Breast epithelium (tissue), 4 donors: ENCODE measurements at regions of chr16 and their contacts with region 1.

Region 1: GRCh38 chr16:25896412-25896811 is 204.7 kb downstream of the HS3ST4 start:
- DNase-seq: no peak
- H3K4me3 ChIP-seq: no peak overlapping the region
- H3K27ac ChIP-seq: no peak overlapping the region
- H3K4me1 ChIP-seq: no peaks in the 10 kb centered on the region
- H3K27me3 ChIP-seq: no peaks in the 10 kb centered on the region
- CTCF ChIP-seq: no peak
- POLR2A ChIP-seq: no peak

Region 2: GRCh38 chr16:24748242-24748641 is 1148.2 kb before region 1 on chr16:
- intact Hi-C with region 1: no loop called
- DNase-seq: peak in 1 of 2 donors; percentile 39
- H3K4me3 ChIP-seq: no peak overlapping the region
- H3K27ac ChIP-seq: peak overlapping the region; percentile 22 to 73
- H3K4me1 ChIP-seq: peaks cover 0 to 12% of the 10 kb centered on the region in 2 donors
- H3K27me3 ChIP-seq: no peaks in the 10 kb centered on the region
- CTCF ChIP-seq: no peak
- POLR2A ChIP-seq: no peak

Region 3: DNA sequence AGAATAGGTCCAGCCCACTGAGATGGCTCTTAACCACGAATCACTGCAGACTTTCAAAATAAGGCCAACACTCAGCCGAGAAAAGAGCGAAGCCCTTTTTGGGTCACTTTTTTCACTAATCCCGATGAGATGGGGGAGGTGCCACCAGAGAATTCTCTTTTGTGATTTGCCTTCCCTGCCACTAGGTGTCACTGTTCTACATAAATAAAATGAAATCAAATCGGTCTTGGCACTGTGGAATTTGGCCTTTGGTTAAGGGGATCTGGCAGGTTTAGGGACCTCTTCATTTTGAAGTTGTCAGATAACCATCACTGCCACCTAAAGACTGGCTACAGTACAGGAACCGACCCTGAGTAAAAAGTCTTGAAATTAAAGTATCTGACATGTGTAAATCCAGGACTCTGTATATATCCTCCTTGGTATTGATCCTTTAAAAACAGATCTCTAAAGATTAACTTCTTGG is 57.7 kb before region 1 on chr16:
- intact Hi-C with region 1: no loop called
- DNase-seq: no peak
- H3K4me3 ChIP-seq: peak overlapping the region in 1 of 3 donors; percentile 3
- H3K27ac ChIP-seq: no peak overlapping the region
- H3K4me1 ChIP-seq: peaks cover 0 to 3% of the 10 kb centered on the region in 2 donors
- H3K27me3 ChIP-seq: no peaks in the 10 kb centered on the region
- CTCF ChIP-seq: peak; percentile 41 to 65 (median 53)
- POLR2A ChIP-seq: no peak

Region 4: DNA sequence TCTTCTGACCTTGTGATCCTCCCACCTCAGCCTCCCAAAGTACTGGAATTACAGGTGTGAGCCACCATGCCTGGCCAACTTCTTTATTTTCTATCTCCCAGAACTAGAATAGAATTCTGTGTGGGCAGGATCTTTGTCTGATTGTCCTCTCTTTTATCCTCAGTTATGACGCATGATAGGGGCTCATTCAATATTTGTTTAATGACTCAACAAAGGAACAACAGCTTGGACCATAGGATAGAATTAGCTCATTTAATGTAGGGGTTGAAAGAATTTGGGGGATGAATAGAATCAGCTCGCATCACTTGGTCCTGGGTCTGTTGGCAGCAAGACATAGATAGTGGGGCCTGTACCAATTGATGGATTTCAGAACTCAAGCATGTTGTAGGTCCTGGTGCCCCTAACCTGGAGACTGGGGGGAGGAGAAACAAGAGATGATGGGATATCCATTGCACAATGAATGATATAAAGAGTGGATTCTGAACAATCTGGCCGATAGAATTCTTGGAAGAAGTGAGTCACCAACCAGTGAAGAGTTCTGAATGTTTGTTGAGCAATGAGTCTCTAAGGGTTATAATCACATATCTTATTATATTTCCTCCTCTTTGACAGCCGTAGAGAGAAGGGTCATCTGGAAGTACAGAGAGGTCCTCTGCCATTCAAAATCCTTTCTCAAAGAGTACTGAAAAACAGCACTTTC is 45.5 kb after region 1 on chr16:
- intact Hi-C with region 1: loop called (anchors 2 kb)
- DNase-seq: no peak
- H3K4me3 ChIP-seq: no peak overlapping the region
- H3K27ac ChIP-seq: no peak overlapping the region
- H3K4me1 ChIP-seq: no peaks in the 10 kb centered on the region
- H3K27me3 ChIP-seq: no peaks in the 10 kb centered on the region
- CTCF ChIP-seq: no peak
- POLR2A ChIP-seq: no peak

Region 5: DNA sequence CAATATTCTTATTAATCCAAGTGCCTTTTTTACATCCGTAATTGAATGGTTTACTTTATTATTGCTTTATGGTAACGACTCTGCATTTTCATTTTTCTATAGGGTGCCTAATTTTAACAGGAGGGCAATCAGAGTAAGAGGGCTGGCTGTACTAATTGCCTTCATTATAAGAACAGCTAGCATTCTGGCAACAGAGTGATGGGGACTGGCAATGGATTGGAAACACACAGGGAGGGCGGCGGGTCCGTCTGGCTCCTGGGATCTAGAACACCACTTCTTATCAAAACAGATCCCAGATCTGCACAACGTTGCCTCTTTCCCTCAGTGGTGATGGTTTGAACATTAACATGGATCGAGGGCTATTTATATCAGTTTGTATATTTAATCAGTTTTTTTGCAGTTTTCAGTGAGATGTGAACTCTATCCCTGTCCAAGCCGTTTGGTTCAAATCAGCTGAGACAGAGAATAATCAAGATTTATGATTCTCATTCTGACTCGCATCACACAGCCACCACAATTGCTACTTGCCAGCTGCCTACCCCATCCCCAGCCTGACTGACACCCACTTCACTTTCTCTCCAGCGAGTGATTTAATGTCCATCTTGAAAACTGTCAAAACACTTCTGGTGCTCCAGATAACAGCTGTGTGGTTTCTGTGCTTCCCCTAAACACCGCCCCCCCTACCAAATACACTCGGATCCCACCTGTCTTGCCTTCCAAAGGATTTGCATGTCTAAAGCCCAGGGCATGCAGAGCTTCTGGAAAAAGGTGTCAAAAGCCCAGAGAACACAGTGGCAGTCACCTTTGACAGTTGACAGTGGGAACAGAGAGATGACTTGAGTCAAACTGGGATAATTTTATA is 123.2 kb after region 1 on chr16:
- intact Hi-C with region 1: loop called (anchors 10 kb)
- DNase-seq: no peak
- H3K4me3 ChIP-seq: no peak overlapping the region
- H3K27ac ChIP-seq: no peak overlapping the region
- H3K4me1 ChIP-seq: no peaks in the 10 kb centered on the region
- H3K27me3 ChIP-seq: no peaks in the 10 kb centered on the region
- CTCF ChIP-seq: no peak
- POLR2A ChIP-seq: no peak